CD4-positive, alpha-beta T cell (primary cell): ENCODE measurements at regions of chr11 and their contacts with region 1.

Region 1: GRCh38 chr11:62905927-62906531 is 15.1 kb downstream of the CHRM1 start:
- DNase-seq: peak; percentile 60 to 87 (median 74)
- ATAC-seq: peak; percentile 80
- H3K4me3 ChIP-seq: no peak overlapping the region
- H3K4me3 Mint-ChIP-seq: no peak overlapping the region
- H3K27ac ChIP-seq: no peak overlapping the region
- H3K27ac Mint-ChIP-seq: no peak overlapping the region
- H3K4me1 ChIP-seq: peaks cover 7% of the 10 kb centered on the region
- H3K4me1 Mint-ChIP-seq: no peaks in the 10 kb centered on the region
- H3K27me3 ChIP-seq: peaks cover 0 to 7% of the 10 kb centered on the region in 2 experiments
- H3K27me3 Mint-ChIP-seq: peaks cover 18% of the 10 kb centered on the region
- CTCF ChIP-seq: peak; percentile 96

Region 2: GRCh38 chr11:61439615-61440014 is 1466.4 kb before region 1 on chr11:
- CTCF ChIA-PET with region 1: no interaction called
- POLR2A ChIA-PET with region 1: no interaction called
- intact Hi-C with region 1: loop called in 1 of 2 experiments (anchors 5 kb)
- DNase-seq: no peak
- ATAC-seq: no peak
- H3K4me3 ChIP-seq: no peak overlapping the region
- H3K4me3 Mint-ChIP-seq: no peak overlapping the region
- H3K27ac ChIP-seq: no peak overlapping the region
- H3K27ac Mint-ChIP-seq: no peak overlapping the region
- H3K4me1 ChIP-seq: peaks cover 16% of the 10 kb centered on the region
- H3K4me1 Mint-ChIP-seq: peaks cover 26% of the 10 kb centered on the region
- H3K27me3 ChIP-seq: no peaks in the 10 kb centered on the region
- H3K27me3 Mint-ChIP-seq: no peaks in the 10 kb centered on the region
- CTCF ChIP-seq: no peak

Region 3: DNA sequence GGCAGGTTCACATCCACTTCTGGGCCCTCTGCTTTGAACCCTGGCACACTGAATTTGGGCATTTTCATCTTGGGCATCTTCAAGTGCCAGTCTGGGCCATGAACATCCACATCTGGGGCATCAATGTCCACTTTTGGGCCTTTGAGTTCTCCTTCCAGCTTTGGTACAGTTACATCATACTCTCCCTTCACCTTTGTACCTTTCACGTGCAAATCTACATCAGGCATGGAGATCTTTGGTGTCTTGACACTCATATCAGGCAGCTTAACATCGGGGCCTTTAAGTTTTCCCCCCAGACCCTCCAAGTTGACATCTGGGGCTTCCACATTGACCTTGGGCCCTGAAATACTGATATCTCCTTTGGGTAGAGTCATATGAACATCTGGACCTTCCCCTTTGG is 373.9 kb before region 1 on chr11:
- CTCF ChIA-PET with region 1: no interaction called
- POLR2A ChIA-PET with region 1: no interaction called
- intact Hi-C with region 1: no loop called
- DNase-seq: no peak
- ATAC-seq: no peak
- H3K4me3 ChIP-seq: no peak overlapping the region
- H3K4me3 Mint-ChIP-seq: no peak overlapping the region
- H3K27ac ChIP-seq: no peak overlapping the region
- H3K27ac Mint-ChIP-seq: peak overlapping the region; percentile 49
- H3K4me1 ChIP-seq: peaks cover 12% of the 10 kb centered on the region
- H3K4me1 Mint-ChIP-seq: peaks cover 6% of the 10 kb centered on the region
- H3K27me3 ChIP-seq: no peaks in the 10 kb centered on the region
- H3K27me3 Mint-ChIP-seq: no peaks in the 10 kb centered on the region
- CTCF ChIP-seq: no peak

Region 4: DNA sequence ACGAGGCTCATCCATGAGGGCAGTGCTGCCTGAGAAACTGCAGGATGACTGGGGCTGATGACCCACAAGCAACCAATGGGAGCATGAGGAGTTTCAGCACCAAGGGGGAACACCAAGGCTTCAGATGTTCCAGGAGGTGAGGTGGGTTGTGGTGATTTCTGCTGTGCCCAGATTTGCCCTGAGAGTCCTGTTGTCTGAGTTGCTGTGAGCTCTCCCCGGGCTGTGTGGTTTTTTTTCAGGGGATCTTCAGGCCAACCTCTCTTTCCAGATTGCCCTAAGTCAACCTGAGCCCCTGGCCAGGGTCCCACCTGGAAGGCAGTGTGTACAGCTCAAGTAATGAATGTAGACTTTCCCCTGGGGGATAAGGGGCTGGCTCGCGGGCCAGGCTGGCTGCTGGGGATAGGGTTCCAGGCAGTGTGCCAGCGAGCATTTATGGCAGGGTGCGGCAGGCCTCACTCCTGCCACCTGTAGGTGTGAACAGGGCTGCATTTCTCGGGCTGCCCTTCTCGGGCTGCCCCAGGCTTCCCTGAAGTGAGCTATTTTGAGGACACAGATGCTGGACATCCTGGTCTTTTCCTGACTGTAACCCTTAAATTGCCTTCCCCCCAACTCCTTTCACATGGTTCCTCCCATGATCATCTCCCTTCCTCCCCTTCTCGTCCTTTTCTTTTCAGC is 69.0 kb after region 1 on chr11:
- CTCF ChIA-PET with region 1: interaction called, 18 read pairs
- POLR2A ChIA-PET with region 1: no interaction called
- intact Hi-C with region 1: loop called in 1 of 2 experiments (anchors 2 kb)
- DNase-seq: peak in 4 of 14 experiments; percentile 2 to 24 (median 13)
- ATAC-seq: no peak
- H3K4me3 ChIP-seq: no peak overlapping the region
- H3K4me3 Mint-ChIP-seq: no peak overlapping the region
- H3K27ac ChIP-seq: no peak overlapping the region
- H3K27ac Mint-ChIP-seq: no peak overlapping the region
- H3K4me1 ChIP-seq: no peaks in the 10 kb centered on the region
- H3K4me1 Mint-ChIP-seq: no peaks in the 10 kb centered on the region
- H3K27me3 ChIP-seq: peaks cover 5 to 8% of the 10 kb centered on the region in 2 experiments
- H3K27me3 Mint-ChIP-seq: peaks cover 43% of the 10 kb centered on the region
- CTCF ChIP-seq: peak; percentile 10

Region 5: GRCh38 chr11:62985041-62985750 is 79.2 kb after region 1 on chr11:
- CTCF ChIA-PET with region 1: no interaction called
- POLR2A ChIA-PET with region 1: no interaction called
- intact Hi-C with region 1: no loop called
- DNase-seq: no peak
- ATAC-seq: no peak
- H3K4me3 ChIP-seq: no peak overlapping the region
- H3K4me3 Mint-ChIP-seq: no peak overlapping the region
- H3K27ac ChIP-seq: no peak overlapping the region
- H3K27ac Mint-ChIP-seq: no peak overlapping the region
- H3K4me1 ChIP-seq: no peaks in the 10 kb centered on the region
- H3K4me1 Mint-ChIP-seq: no peaks in the 10 kb centered on the region
- H3K27me3 ChIP-seq: no peaks in the 10 kb centered on the region
- H3K27me3 Mint-ChIP-seq: peaks cover 20% of the 10 kb centered on the region
- CTCF ChIP-seq: no peak

Region 6: DNA sequence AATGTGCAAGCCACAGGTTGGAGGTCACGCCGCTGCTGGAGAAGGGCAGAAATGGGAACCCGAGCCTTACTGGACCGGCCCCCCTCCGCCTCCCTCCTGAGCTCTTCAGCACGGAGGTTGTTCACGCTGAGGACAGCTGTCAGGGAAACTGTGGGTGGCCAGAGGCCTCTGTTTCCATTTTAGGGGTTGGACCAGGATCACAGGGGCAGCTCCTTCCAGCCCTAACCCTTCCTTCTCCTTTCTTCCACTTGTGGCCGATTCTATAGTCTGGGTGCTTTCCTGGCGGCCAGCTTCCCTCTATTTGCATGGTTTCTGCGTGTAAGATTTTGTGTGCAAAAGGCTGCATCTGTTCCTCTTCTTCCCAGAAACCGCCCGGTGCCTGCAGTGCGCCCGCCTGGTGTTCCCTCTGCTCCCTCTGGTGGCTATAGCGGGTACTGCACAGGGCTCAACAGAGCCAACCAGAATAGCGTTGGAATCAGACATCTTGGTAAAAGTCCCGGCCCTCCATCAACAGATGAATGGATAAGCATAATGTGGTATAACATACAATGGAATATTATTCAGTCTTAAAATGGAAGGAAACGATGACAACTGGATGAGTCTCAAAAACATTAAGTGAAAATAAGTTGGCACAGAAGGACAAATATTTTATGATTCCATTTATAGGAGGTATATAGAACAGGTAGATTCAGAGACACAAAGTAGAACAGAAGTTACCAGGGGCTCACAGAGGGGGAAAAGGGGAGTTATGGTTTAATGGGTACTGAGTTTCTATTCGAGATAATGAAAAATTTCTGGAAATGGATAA is 118.0 kb after region 1 on chr11:
- CTCF ChIA-PET with region 1: interaction called, 66 read pairs
- POLR2A ChIA-PET with region 1: interaction called, 5 read pairs
- intact Hi-C with region 1: loop called (anchors 1 kb)
- DNase-seq: peak; percentile 71 to 89 (median 83)
- ATAC-seq: peak; percentile 95
- H3K4me3 ChIP-seq: no peak overlapping the region
- H3K4me3 Mint-ChIP-seq: no peak overlapping the region
- H3K27ac ChIP-seq: no peak overlapping the region
- H3K27ac Mint-ChIP-seq: no peak overlapping the region
- H3K4me1 ChIP-seq: peaks cover 6% of the 10 kb centered on the region
- H3K4me1 Mint-ChIP-seq: no peaks in the 10 kb centered on the region
- H3K27me3 ChIP-seq: peaks cover 0 to 5% of the 10 kb centered on the region in 2 experiments
- H3K27me3 Mint-ChIP-seq: peaks cover 47% of the 10 kb centered on the region
- CTCF ChIP-seq: peak; percentile 100

Region 7: GRCh38 chr11:63212742-63213141 is 306.7 kb after region 1 on chr11:
- CTCF ChIA-PET with region 1: interaction called, 4 read pairs
- POLR2A ChIA-PET with region 1: no interaction called
- intact Hi-C with region 1: loop called (anchors 5 kb)
- DNase-seq: peak in 4 of 14 experiments; percentile 3 to 49 (median 39)
- ATAC-seq: no peak
- H3K4me3 ChIP-seq: no peak overlapping the region
- H3K4me3 Mint-ChIP-seq: no peak overlapping the region
- H3K27ac ChIP-seq: no peak overlapping the region
- H3K27ac Mint-ChIP-seq: no peak overlapping the region
- H3K4me1 ChIP-seq: no peaks in the 10 kb centered on the region
- H3K4me1 Mint-ChIP-seq: no peaks in the 10 kb centered on the region
- H3K27me3 ChIP-seq: peaks cover 0 to 11% of the 10 kb centered on the region in 2 experiments
- H3K27me3 Mint-ChIP-seq: peaks cover 41% of the 10 kb centered on the region
- CTCF ChIP-seq: peak; percentile 59